ENCODE measurements at regions of chr15 and their contacts with region 1.

Region 1: GRCh38 chr15:89206908-89207331 is 14.5 kb downstream of the RLBP1 start:
- H3K4me3 ChIP-seq: no peak overlapping the region
- H3K27ac ChIP-seq: no peak overlapping the region
- H3K4me1 ChIP-seq: no peaks in the 10 kb centered on the region
- CTCF ChIP-seq: peak; percentile 74

Region 2: DNA sequence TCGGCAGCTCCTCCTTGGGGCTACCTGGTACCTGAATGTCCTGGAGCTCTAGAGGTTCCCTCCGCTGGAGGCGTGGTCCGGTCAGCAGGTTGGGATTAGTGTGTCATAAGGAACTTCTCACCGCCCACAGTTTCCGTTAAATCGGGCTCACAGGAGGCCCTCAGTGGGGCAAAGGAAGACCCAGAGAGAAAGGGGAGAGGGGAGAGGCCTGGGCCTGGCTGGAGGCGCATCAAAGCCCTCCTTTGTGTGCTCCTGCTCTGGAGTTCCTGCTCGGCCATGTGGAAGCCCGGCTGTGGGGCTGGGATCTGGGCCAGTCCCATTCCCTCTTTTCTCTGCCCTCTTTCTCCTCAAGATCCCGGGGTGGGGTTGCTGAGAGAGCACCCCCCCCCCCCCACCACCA is 14.6 kb after region 1 on chr15 and contains the start of gene RLBP1:
- CTCF ChIA-PET with region 1: interaction called, 24 read pairs
- POLR2A ChIA-PET with region 1: no interaction called
- H3K4me3 ChIP-seq: no peak within 1 kb of the TSS
- H3K27ac ChIP-seq: no peak within 1 kb of the TSS
- H3K4me1 ChIP-seq: no peaks in the 10 kb centered on the region
- CTCF ChIP-seq: no peak

Region 3: GRCh38 chr15:89243691-89244471 is 37.0 kb after region 1 on chr15 and contains the start of gene FANCI:
- CTCF ChIA-PET with region 1: interaction called, 25 read pairs
- POLR2A ChIA-PET with region 1: interaction called, 11 read pairs
- H3K4me3 ChIP-seq: peak within 1 kb of the TSS; percentile 71
- H3K27ac ChIP-seq: peak within 1 kb of the TSS; percentile 68
- H3K4me1 ChIP-seq: peaks cover 8% of the 10 kb centered on the region
- CTCF ChIP-seq: peak; percentile 99

Region 4: GRCh38 chr15:89293012-89293411 is 86.1 kb after region 1 on chr15:
- CTCF ChIA-PET with region 1: interaction called, 11 read pairs
- POLR2A ChIA-PET with region 1: no interaction called
- H3K4me3 ChIP-seq: no peak overlapping the region
- H3K27ac ChIP-seq: no peak overlapping the region
- H3K4me1 ChIP-seq: no peaks in the 10 kb centered on the region
- CTCF ChIP-seq: no peak

Measured in HEK293 (cell line).